ENCODE measurements at regions of chr11 and their contacts with region 1.

Region 1: DNA sequence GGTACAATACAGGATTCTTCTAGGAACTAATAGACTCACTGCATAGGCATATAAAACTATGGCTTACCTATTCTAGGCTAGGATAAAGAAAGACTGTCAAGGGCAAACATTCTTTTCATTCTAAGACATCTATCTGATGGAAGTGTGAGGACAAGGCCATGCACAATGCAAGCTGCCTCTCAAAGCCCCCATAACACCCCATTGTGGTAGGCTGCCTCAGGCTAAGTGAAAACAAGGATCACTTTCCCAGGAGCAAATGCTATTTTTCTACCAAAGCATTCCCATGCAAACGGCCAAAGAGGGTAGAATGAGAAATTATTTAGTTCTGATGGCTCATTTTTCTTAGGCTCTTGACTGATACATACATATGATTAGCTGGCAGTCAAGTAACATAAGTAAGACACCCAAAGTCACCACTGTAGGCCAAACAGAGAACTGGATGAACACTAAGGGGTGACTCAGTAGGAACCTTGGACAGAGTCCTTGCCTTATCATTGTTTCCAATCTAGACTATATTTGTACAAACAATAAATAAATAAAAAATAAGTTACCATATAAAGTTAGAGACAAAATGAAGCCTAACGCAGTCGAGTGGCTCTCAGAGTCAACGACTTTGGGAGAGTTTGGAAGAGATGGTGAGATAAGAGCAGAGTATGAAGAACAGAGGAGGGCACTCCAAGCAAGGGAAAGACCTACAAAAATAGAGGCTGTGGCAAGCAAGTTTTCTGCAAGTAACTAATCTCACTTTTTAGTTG is 303.6 kb downstream of the SBF2 start:
- DNase-seq: no peak
- ATAC-seq: no peak
- H3K4me3 ChIP-seq: no peak overlapping the region
- H3K27ac ChIP-seq: no peak overlapping the region
- H3K4me1 ChIP-seq: no peaks in the 10 kb centered on the region
- H3K27me3 ChIP-seq: no peaks in the 10 kb centered on the region
- CTCF ChIP-seq: peak in 1 of 3 experiments; percentile 17; a peak in 1 of 6 replicates
- EP300 ChIP-seq: no peak
- POLR2A ChIP-seq: no peak
- RAD21 ChIP-seq: peak; percentile 43 to 61

Region 2: GRCh38 chr11:9534791-9535781 is 455.3 kb before region 1 on chr11:
- CTCF ChIA-PET with region 1: no interaction called
- POLR2A ChIA-PET with region 1: no interaction called
- in situ Hi-C with region 1: no loop called
- intact Hi-C with region 1: no loop called
- DNase-seq: peak; percentile 75 to 88 (median 78)
- ATAC-seq: peak; percentile 86
- H3K4me3 ChIP-seq: no peak overlapping the region
- H3K27ac ChIP-seq: no peak overlapping the region
- H3K4me1 ChIP-seq: peaks cover 11 to 15% of the 10 kb centered on the region in 2 experiments; a peak in 4 of 5 replicates
- H3K27me3 ChIP-seq: no peaks in the 10 kb centered on the region
- CTCF ChIP-seq: peak; percentile 88 to 96 (median 94)
- EP300 ChIP-seq: peak; percentile 32; the same call in 1 of the 2 replicates
- POLR2A ChIP-seq: no peak
- RAD21 ChIP-seq: peak; percentile 82 to 92

Region 3: GRCh38 chr11:9868624-9869023 is 121.8 kb before region 1 on chr11:
- CTCF ChIA-PET with region 1: no interaction called
- POLR2A ChIA-PET with region 1: no interaction called
- in situ Hi-C with region 1: no loop called
- intact Hi-C with region 1: no loop called
- DNase-seq: no peak
- ATAC-seq: no peak
- H3K4me3 ChIP-seq: no peak overlapping the region
- H3K27ac ChIP-seq: no peak overlapping the region
- H3K4me1 ChIP-seq: no peaks in the 10 kb centered on the region
- H3K27me3 ChIP-seq: no peaks in the 10 kb centered on the region
- CTCF ChIP-seq: no peak
- EP300 ChIP-seq: no peak
- POLR2A ChIP-seq: no peak
- RAD21 ChIP-seq: no peak

Region 4: GRCh38 chr11:9972989-9973388 is 17.4 kb before region 1 on chr11:
- CTCF ChIA-PET with region 1: no interaction called
- POLR2A ChIA-PET with region 1: no interaction called
- in situ Hi-C with region 1: no loop called
- intact Hi-C with region 1: no loop called
- DNase-seq: peak; percentile 39 to 61 (median 48)
- ATAC-seq: peak; percentile 82
- H3K4me3 ChIP-seq: no peak overlapping the region
- H3K27ac ChIP-seq: no peak overlapping the region
- H3K4me1 ChIP-seq: no peaks in the 10 kb centered on the region
- H3K27me3 ChIP-seq: no peaks in the 10 kb centered on the region
- CTCF ChIP-seq: peak; percentile 66 to 91 (median 71)
- EP300 ChIP-seq: no peak
- POLR2A ChIP-seq: no peak
- RAD21 ChIP-seq: peak; percentile 81 to 93

Region 5: GRCh38 chr11:10076458-10077141 is 86.2 kb after region 1 on chr11:
- CTCF ChIA-PET with region 1: no interaction called
- POLR2A ChIA-PET with region 1: interaction called, 3 read pairs
- in situ Hi-C with region 1: no loop called
- intact Hi-C with region 1: loop called (anchors 5 kb)
- DNase-seq: peak; percentile 62 to 69 (median 63)
- ATAC-seq: peak; percentile 94
- H3K4me3 ChIP-seq: no peak overlapping the region
- H3K27ac ChIP-seq: no peak overlapping the region
- H3K4me1 ChIP-seq: no peaks in the 10 kb centered on the region
- H3K27me3 ChIP-seq: no peaks in the 10 kb centered on the region
- CTCF ChIP-seq: peak; percentile 80 to 86 (median 86)
- EP300 ChIP-seq: no peak
- POLR2A ChIP-seq: no peak
- RAD21 ChIP-seq: peak; percentile 17 to 74; a peak in 2 of 4 replicates

Region 6: GRCh38 chr11:10307442-10308207 is 317.2 kb after region 1 on chr11:
- CTCF ChIA-PET with region 1: no interaction called
- POLR2A ChIA-PET with region 1: no interaction called
- in situ Hi-C with region 1: no loop called
- intact Hi-C with region 1: loop called (anchors 2 kb)
- DNase-seq: peak; percentile 81 to 87 (median 84)
- ATAC-seq: peak; percentile 94
- H3K4me3 ChIP-seq: peak overlapping the region; percentile 32
- H3K27ac ChIP-seq: no peak overlapping the region; the same call in 2 of the 3 replicates
- H3K4me1 ChIP-seq: peaks cover 24 to 50% of the 10 kb centered on the region in 2 experiments
- H3K27me3 ChIP-seq: peaks cover 15 to 19% of the 10 kb centered on the region in 2 experiments
- CTCF ChIP-seq: peak; percentile 87 to 97 (median 88)
- EP300 ChIP-seq: no peak
- POLR2A ChIP-seq: no peak
- RAD21 ChIP-seq: peak; percentile 85 to 89

Region 7: GRCh38 chr11:10322830-10323792 is 332.7 kb after region 1 on chr11:
- CTCF ChIA-PET with region 1: interaction called, 3 read pairs
- POLR2A ChIA-PET with region 1: no interaction called
- in situ Hi-C with region 1: no loop called
- intact Hi-C with region 1: loop called (anchors 5 kb)
- DNase-seq: peak; percentile 36 to 77 (median 51)
- ATAC-seq: peak; percentile 91
- H3K4me3 ChIP-seq: no peak overlapping the region
- H3K27ac ChIP-seq: no peak overlapping the region
- H3K4me1 ChIP-seq: peaks cover 0 to 5% of the 10 kb centered on the region in 2 experiments; a peak in 2 of 5 replicates
- H3K27me3 ChIP-seq: no peaks in the 10 kb centered on the region
- CTCF ChIP-seq: peak; percentile 46 to 82 (median 57); a peak in 4 of 6 replicates
- EP300 ChIP-seq: no peak; the same call in 1 of the 2 replicates
- POLR2A ChIP-seq: no peak
- RAD21 ChIP-seq: peak; percentile 71 to 72

Measured in K562 (cell line).